ENCODE measurements at regions of chrX and their contacts with region 1.

Region 1: DNA sequence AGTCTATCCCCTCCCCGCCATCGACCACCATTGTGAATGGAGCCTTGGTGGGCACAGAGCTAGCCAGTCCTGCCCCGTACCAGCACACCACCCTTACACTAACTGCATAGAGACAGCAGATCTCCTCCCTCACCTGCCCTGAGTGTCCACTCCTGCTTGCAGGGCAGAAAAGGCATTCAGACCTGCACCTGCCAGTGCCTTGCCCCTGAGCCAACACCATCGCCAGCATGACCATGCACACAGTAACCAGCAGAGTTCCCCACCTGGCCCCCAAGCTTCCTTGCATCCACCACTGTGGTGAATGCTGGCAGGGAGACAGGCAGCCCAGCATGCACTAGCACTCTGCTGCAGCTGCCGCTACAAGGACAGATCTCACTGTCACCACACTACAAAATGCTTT is 397.1 kb downstream of the KLHL4 start:
- DNase-seq: no peak
- ATAC-seq: no peak
- H3K4me3 ChIP-seq: no peak overlapping the region
- H3K27ac ChIP-seq: no peak overlapping the region
- H3K4me1 ChIP-seq: no peaks in the 10 kb centered on the region
- H3K27me3 ChIP-seq: no peaks in the 10 kb centered on the region
- CTCF ChIP-seq: no peak

Region 2: DNA sequence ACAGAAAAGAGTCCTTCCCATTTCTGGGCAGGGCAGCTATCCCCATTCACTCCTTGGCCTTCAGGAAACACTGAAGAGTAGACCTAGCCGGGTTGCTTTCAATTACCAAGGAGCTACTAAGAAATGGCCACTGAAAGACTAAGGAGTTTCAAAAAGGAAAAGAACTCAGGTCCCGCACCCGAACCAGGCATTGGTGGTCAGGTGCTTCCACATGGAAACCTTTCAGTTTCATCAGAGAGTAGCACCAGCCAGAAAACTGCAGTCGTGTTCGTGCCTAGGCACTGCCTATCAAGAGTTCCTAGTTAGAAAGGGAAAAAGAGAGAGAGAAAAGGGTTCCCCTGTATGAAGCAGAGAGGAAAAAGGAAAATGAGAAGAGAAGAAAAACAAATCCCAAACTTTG is 159.2 kb before region 1 on chrX:
- intact Hi-C with region 1: no loop called
- DNase-seq: no peak
- ATAC-seq: no peak
- H3K4me3 ChIP-seq: no peak overlapping the region
- H3K27ac ChIP-seq: no peak overlapping the region
- H3K4me1 ChIP-seq: no peaks in the 10 kb centered on the region
- H3K27me3 ChIP-seq: no peaks in the 10 kb centered on the region
- CTCF ChIP-seq: no peak

Region 3: GRCh38 chrX:87874043-87874442 is 40.7 kb before region 1 on chrX:
- intact Hi-C with region 1: loop called in 1 of 2 experiments (anchors 2 kb)
- DNase-seq: no peak
- ATAC-seq: no peak
- H3K4me3 ChIP-seq: no peak overlapping the region
- H3K27ac ChIP-seq: no peak overlapping the region
- H3K4me1 ChIP-seq: no peaks in the 10 kb centered on the region
- H3K27me3 ChIP-seq: no peaks in the 10 kb centered on the region
- CTCF ChIP-seq: no peak

Region 4: GRCh38 chrX:88146577-88146976 is 231.9 kb after region 1 on chrX:
- intact Hi-C with region 1: no loop called
- DNase-seq: no peak
- ATAC-seq: no peak
- H3K4me3 ChIP-seq: no peak overlapping the region
- H3K27ac ChIP-seq: no peak overlapping the region
- H3K4me1 ChIP-seq: no peaks in the 10 kb centered on the region
- H3K27me3 ChIP-seq: no peaks in the 10 kb centered on the region
- CTCF ChIP-seq: no peak